Posterior vena cava (tissue), 2 donors: ENCODE measurements at regions of chr1 and their contacts with region 1.

Region 1: DNA sequence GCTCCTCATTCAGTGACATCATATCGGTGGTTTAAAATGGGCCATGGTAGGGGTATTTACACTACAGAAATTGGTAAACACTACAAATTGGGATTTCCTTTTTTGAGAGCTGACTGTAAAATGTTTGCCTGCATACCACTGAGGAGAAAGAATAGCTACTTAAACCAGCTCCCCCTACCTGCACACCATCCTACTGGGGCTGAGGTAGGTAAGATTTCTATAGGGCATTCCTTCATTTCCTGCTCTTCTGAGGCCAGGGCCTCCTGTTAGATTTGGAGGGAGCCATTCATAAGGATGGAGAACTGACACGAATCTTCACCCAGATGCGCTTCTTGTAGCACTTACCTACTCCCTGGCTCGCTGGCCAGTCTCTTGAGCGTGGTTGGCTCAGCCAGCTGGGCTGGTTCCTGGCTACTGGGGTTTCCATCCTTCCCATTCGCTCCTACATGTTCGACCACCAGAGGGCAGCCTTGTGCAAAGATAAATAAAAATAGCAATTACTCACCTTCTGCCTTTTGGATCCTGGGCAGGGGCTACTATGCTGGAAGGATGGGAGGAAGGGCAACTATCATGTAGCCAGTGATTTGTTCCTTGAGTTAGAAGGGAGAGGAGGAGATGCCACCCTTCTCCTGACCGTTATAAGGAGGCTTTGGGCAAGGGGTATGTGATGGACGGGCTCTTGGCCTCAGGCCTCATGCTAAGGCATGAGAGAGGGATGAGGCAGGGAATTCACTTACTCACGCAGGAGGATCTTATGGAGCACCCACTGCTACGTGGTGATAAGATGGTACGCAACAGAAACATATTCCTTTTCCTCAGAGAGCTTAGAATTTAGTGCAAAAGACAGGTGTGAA is 10.7 kb downstream of the OPTC start:
- DNase-seq: peak; percentile 91

Region 2: DNA sequence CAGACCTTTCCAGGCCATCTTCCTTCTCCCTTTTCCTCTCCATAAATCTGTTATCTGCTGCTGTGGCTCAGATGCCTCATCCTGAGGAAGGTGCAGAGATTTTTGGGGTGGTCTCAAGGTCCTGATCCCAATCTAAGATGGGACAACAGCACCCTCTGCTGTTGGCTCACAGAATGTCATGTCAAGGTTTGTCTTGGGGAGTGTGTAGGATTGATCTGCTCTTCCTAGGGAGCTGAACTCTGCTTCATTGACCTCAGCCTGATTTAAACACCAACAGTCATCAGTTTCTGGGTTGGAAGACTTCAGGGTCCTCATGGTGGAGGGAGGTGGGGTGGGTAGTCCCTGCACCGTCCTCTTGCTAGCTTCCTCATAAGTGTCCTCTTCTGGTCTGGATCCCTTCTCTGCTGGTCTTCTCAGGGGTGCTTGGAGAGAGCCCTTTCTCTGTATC is 197.5 kb after region 1 on chr1:
- intact Hi-C with region 1: loop called (anchors 5 kb)
- DNase-seq: no peak

Region 3: GRCh38 chr1:203797948-203798655 is 293.5 kb after region 1 on chr1:
- intact Hi-C with region 1: no loop called
- DNase-seq: no peak